Activated naive CD4-positive, alpha-beta T cell treated with anti-CD3 and anti-CD28 coated beads, Interleukin-2, amount 10 ng/mL, durations not matched to agents 7 days and 5 days (primary cell): ENCODE measurements at regions of chr12 and their contacts with region 1.

Region 1: DNA sequence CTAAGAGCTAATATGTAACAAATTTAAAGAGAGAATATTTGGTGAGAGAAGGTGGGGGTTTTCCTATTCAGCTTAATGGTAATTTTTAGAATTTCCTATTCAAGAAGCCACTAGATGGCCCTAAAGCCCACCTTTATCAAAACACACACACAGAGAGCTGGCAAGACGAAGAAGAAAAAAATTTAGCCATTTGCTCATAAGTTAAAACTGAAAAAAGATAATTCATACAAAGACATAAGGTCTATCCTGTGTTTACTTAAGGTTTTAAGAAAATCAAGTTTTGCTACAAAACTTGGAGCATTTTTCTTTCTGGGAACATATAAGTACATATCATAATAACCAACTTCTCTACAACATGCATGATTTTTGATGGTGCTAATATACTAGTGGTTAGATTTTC is 46.8 kb upstream of the PCED1B start:
- DNase-seq: peak; percentile 22
- H3K4me3 Mint-ChIP-seq: no peak overlapping the region
- H3K27ac Mint-ChIP-seq: no peak overlapping the region
- H3K4me1 Mint-ChIP-seq: peaks cover 19% of the 10 kb centered on the region
- H3K27me3 Mint-ChIP-seq: no peaks in the 10 kb centered on the region

Region 2: GRCh38 chr12:47071241-47071852 is 38.7 kb after region 1 on chr12:
- CTCF ChIA-PET with region 1: interaction called, 34 read pairs
- DNase-seq: no peak
- H3K4me3 Mint-ChIP-seq: no peak overlapping the region
- H3K27ac Mint-ChIP-seq: no peak overlapping the region
- H3K4me1 Mint-ChIP-seq: peaks cover under 1% of the 10 kb centered on the region
- H3K27me3 Mint-ChIP-seq: no peaks in the 10 kb centered on the region

Region 3: GRCh38 chr12:47102845-47103651 is 70.4 kb after region 1 on chr12:
- CTCF ChIA-PET with region 1: no interaction called
- DNase-seq: no peak
- H3K4me3 Mint-ChIP-seq: no peak overlapping the region
- H3K27ac Mint-ChIP-seq: no peak overlapping the region
- H3K4me1 Mint-ChIP-seq: no peaks in the 10 kb centered on the region
- H3K27me3 Mint-ChIP-seq: no peaks in the 10 kb centered on the region

Region 4: GRCh38 chr12:47408171-47408871 is 375.7 kb after region 1 on chr12:
- CTCF ChIA-PET with region 1: interaction called, 15 read pairs
- DNase-seq: peak; percentile 68
- H3K4me3 Mint-ChIP-seq: no peak overlapping the region
- H3K27ac Mint-ChIP-seq: peak overlapping the region; percentile 73
- H3K4me1 Mint-ChIP-seq: peaks cover 55% of the 10 kb centered on the region
- H3K27me3 Mint-ChIP-seq: peaks cover 4% of the 10 kb centered on the region

Region 5: GRCh38 chr12:47413806-47414205 is 381.2 kb after region 1 on chr12:
- CTCF ChIA-PET with region 1: interaction called, 15 read pairs
- DNase-seq: no peak
- H3K4me3 Mint-ChIP-seq: no peak overlapping the region
- H3K27ac Mint-ChIP-seq: no peak overlapping the region
- H3K4me1 Mint-ChIP-seq: peaks cover 36% of the 10 kb centered on the region
- H3K27me3 Mint-ChIP-seq: no peaks in the 10 kb centered on the region

Region 6: DNA sequence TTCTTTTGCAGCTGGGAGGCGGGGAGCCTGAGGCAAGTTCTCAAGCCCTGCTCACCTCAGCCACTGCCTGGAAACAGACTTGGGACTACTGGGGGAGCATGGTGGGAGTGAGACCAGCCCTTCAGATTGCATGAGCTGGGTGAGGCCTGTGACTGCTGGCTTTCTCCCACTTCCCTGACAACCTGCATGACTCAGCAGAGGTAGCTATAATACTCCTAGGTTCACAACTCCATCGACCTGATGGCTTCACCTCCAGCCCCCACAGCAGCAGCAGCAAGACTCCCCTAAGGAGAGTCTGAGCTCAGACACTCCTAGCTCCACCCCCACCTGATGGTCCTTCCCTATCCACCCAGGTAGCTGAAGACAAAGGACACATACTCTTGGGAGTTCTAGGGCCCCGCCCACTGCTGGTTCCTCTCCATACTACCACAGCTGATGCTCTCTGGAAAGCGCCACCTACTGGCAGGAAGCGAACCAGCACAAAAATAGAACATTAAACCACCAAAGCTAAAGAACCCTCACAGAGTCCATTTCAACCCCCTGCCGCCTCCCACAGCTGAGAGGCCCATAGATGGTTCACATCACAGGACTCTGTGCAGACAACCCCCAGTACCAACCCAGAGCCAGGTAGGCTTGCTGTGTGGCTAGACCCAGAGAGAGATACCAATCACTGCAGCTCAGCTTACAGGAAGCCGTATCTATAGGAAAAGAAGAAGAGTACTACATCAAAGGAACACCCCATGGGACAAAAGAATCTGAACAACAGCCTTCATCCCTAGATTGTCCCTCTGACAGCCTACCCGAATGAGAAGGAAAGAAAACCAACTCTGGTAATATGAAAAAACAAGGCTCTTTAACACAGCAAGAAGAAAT is 604.5 kb after region 1 on chr12:
- CTCF ChIA-PET with region 1: interaction called, 26 read pairs
- DNase-seq: peak; percentile 54
- H3K4me3 Mint-ChIP-seq: no peak overlapping the region
- H3K27ac Mint-ChIP-seq: no peak overlapping the region
- H3K4me1 Mint-ChIP-seq: no peaks in the 10 kb centered on the region
- H3K27me3 Mint-ChIP-seq: no peaks in the 10 kb centered on the region

Region 7: GRCh38 chr12:47686645-47687240 is 654.1 kb after region 1 on chr12:
- CTCF ChIA-PET with region 1: interaction called, 12 read pairs
- DNase-seq: peak; percentile 38
- H3K4me3 Mint-ChIP-seq: no peak overlapping the region
- H3K27ac Mint-ChIP-seq: no peak overlapping the region
- H3K4me1 Mint-ChIP-seq: peaks cover 7% of the 10 kb centered on the region
- H3K27me3 Mint-ChIP-seq: no peaks in the 10 kb centered on the region